Caco-2 (cell line): ENCODE measurements at regions of chr11 and their contacts with region 1.

Region 1: GRCh38 chr11:31045335-31045734 is 324.2 kb downstream of the DCDC1 start:
- DNase-seq: peak in 1 of 2 experiments; percentile 9
- H3K4me3 ChIP-seq: no peak overlapping the region
- H3K4me3 Mint-ChIP-seq: no peak overlapping the region
- H3K27ac Mint-ChIP-seq: no peak overlapping the region
- H3K4me1 ChIP-seq: no peaks in the 10 kb centered on the region
- H3K4me1 Mint-ChIP-seq: no peaks in the 10 kb centered on the region
- H3K27me3 ChIP-seq: no peaks in the 10 kb centered on the region
- H3K27me3 Mint-ChIP-seq: peaks cover 3% of the 10 kb centered on the region
- CTCF ChIP-seq: peak; percentile 36 to 56

Region 2: DNA sequence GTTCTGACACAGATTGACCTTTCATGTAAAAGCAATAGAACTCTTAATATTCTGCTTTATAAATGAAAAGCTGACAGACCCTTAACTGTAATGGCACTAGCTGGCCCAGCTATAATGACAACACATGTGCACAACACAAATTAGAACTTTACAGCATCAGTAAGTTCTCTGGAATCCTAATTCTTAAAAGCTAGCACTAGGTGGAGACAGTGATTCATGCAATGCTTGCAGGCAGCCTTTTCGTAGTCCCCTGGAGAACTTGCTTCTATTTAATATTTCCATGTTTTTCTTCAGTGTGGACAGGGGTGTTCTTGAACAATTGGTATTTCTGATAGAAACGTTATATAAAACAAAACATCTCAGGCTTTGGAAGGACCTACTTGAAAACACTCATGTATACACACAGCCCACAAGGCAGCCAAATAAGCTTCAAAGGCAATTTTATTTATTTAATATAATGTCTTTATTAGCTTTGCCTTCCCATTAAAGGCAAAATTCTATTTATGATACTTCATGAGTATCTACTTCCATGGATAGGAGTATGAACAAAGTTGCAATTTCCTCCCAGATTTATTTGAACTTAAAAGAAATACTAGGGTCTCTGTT is 84.8 kb before region 1 on chr11:
- CTCF ChIA-PET with region 1: interaction called, 37 read pairs
- POLR2A ChIA-PET with region 1: interaction called, 3 read pairs
- intact Hi-C with region 1: loop called (anchors 1 kb)
- DNase-seq: peak in 1 of 2 experiments; percentile 43
- H3K4me3 ChIP-seq: no peak overlapping the region
- H3K4me3 Mint-ChIP-seq: no peak overlapping the region
- H3K27ac Mint-ChIP-seq: no peak overlapping the region
- H3K4me1 ChIP-seq: no peaks in the 10 kb centered on the region
- H3K4me1 Mint-ChIP-seq: no peaks in the 10 kb centered on the region
- H3K27me3 ChIP-seq: no peaks in the 10 kb centered on the region
- H3K27me3 Mint-ChIP-seq: peaks cover 7% of the 10 kb centered on the region
- CTCF ChIP-seq: peak; percentile 62 to 78

Region 3: DNA sequence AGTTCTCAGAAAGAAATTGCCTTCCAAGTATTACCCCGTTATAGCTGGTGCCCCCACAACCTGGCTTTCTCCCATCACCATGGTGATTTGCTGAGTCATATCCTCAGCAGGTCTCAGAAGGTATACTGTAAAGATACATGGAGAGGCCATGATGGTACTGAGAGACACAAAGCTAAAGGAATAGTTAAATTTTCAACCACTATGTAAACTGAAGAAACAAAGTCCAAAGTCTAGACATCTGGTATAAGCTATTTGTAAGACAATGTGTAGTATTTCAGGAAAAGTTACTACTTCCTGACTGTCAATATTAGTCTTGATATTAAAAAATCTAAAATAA is 52.9 kb before region 1 on chr11:
- CTCF ChIA-PET with region 1: no interaction called
- POLR2A ChIA-PET with region 1: no interaction called
- intact Hi-C with region 1: no loop called
- DNase-seq: peak in 1 of 2 experiments; percentile 16
- H3K4me3 ChIP-seq: no peak overlapping the region
- H3K4me3 Mint-ChIP-seq: peak overlapping the region; percentile 32
- H3K27ac Mint-ChIP-seq: no peak overlapping the region
- H3K4me1 ChIP-seq: peaks cover 19% of the 10 kb centered on the region
- H3K4me1 Mint-ChIP-seq: no peaks in the 10 kb centered on the region
- H3K27me3 ChIP-seq: no peaks in the 10 kb centered on the region
- H3K27me3 Mint-ChIP-seq: no peaks in the 10 kb centered on the region
- CTCF ChIP-seq: no peak

Region 4: DNA sequence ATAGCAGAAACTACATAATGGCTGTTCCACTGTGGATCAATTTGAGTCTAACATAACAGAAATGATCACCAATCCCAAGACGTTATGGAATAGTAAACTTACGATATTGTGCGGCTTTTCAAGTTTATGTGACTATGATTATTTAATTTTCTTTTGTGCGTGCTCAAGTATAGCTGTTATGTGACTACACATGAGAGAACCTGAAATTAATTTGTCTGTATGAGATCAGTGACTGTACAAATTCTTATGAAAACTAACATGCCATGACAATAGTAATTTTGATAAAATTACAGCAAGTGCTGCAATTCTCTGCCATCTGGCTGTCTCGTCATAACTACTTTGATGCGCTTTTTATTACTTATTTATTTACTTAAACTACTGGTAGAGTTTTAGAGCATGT is 19.0 kb before region 1 on chr11:
- CTCF ChIA-PET with region 1: no interaction called
- POLR2A ChIA-PET with region 1: no interaction called
- intact Hi-C with region 1: no loop called
- DNase-seq: no peak
- H3K4me3 ChIP-seq: no peak overlapping the region
- H3K4me3 Mint-ChIP-seq: no peak overlapping the region
- H3K27ac Mint-ChIP-seq: no peak overlapping the region
- H3K4me1 ChIP-seq: no peaks in the 10 kb centered on the region
- H3K4me1 Mint-ChIP-seq: no peaks in the 10 kb centered on the region
- H3K27me3 ChIP-seq: no peaks in the 10 kb centered on the region
- H3K27me3 Mint-ChIP-seq: peaks cover 6% of the 10 kb centered on the region
- CTCF ChIP-seq: no peak